T-cell (primary cell): ENCODE measurements at regions of chr5 and their contacts with region 1.

Region 1: GRCh38 chr5:112848116-112848811 is 12.8 kb upstream of the SRP19 start:
- DNase-seq: peak in 3 of 35 experiments; percentile 11 to 66 (median 12)
- ATAC-seq: peak; percentile 93 to 99 (median 96)
- H3K4me3 ChIP-seq: no peak overlapping the region
- H3K4me3 Mint-ChIP-seq: no peak overlapping the region
- H3K27ac ChIP-seq: no peak overlapping the region
- H3K27ac Mint-ChIP-seq: no peak overlapping the region
- H3K4me1 ChIP-seq: no peaks in the 10 kb centered on the region
- H3K4me1 Mint-ChIP-seq: peaks cover 4 to 7% (median 4%) of the 10 kb centered on the region in 3 donors
- H3K27me3 ChIP-seq: peaks cover 0 to 4% of the 10 kb centered on the region in 2 experiments
- H3K27me3 Mint-ChIP-seq: peaks cover 0 to 3% of the 10 kb centered on the region in 2 donors

Region 2: GRCh38 chr5:112551419-112552032 is 296.7 kb before region 1 on chr5:
- CTCF ChIA-PET with region 1: interaction called, 3 to 10 read pairs
- POLR2A ChIA-PET with region 1: no interaction called
- DNase-seq: peak in 21 of 35 experiments; percentile 3 to 73 (median 18)
- ATAC-seq: peak in 3 of 4 experiments; percentile 42 to 49 (median 43)
- H3K4me3 ChIP-seq: no peak overlapping the region
- H3K4me3 Mint-ChIP-seq: no peak overlapping the region
- H3K27ac ChIP-seq: no peak overlapping the region
- H3K27ac Mint-ChIP-seq: no peak overlapping the region
- H3K4me1 ChIP-seq: no peaks in the 10 kb centered on the region
- H3K4me1 Mint-ChIP-seq: no peaks in the 10 kb centered on the region
- H3K27me3 ChIP-seq: no peaks in the 10 kb centered on the region
- H3K27me3 Mint-ChIP-seq: peaks cover 0 to 17% of the 10 kb centered on the region in 2 donors

Region 3: DNA sequence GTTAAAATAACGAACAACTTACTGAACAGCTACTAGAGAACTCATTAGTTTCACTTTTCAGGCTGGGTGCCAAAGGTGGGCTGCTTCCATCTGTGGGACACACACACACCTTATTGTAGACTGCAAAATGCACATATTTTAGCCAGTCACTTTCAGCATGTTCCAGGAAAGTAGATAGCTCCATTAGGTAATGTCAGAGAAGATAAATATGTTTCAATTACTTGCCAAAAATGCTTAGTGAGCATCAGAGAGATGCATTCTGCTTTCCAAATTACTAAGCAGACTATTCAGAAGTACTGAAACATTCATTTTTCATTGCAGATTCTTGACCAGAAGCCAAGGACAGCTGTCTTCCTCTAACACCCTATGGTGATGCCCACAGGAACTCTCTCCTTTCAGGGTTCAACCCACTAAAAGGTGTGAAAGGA is 166.8 kb before region 1 on chr5:
- CTCF ChIA-PET with region 1: no interaction called
- POLR2A ChIA-PET with region 1: no interaction called
- DNase-seq: no peak
- ATAC-seq: no peak
- H3K4me3 ChIP-seq: no peak overlapping the region
- H3K4me3 Mint-ChIP-seq: no peak overlapping the region
- H3K27ac ChIP-seq: no peak overlapping the region
- H3K27ac Mint-ChIP-seq: no peak overlapping the region
- H3K4me1 ChIP-seq: no peaks in the 10 kb centered on the region
- H3K4me1 Mint-ChIP-seq: no peaks in the 10 kb centered on the region
- H3K27me3 ChIP-seq: peaks cover 0 to 11% of the 10 kb centered on the region in 2 experiments
- H3K27me3 Mint-ChIP-seq: peaks cover 23 to 38% of the 10 kb centered on the region in 2 donors

Region 4: GRCh38 chr5:112833971-112834370 is 14.3 kb before region 1 on chr5:
- CTCF ChIA-PET with region 1: interaction called, 3 to 11 read pairs
- POLR2A ChIA-PET with region 1: no interaction called
- DNase-seq: no peak
- ATAC-seq: no peak
- H3K4me3 ChIP-seq: no peak overlapping the region
- H3K4me3 Mint-ChIP-seq: no peak overlapping the region
- H3K27ac ChIP-seq: no peak overlapping the region
- H3K27ac Mint-ChIP-seq: no peak overlapping the region
- H3K4me1 ChIP-seq: no peaks in the 10 kb centered on the region
- H3K4me1 Mint-ChIP-seq: no peaks in the 10 kb centered on the region
- H3K27me3 ChIP-seq: no peaks in the 10 kb centered on the region
- H3K27me3 Mint-ChIP-seq: no peaks in the 10 kb centered on the region

Region 5: GRCh38 chr5:112860929-112861637 is 12.8 kb after region 1 on chr5 and contains the start of gene SRP19:
- CTCF ChIA-PET with region 1: interaction called, 7 to 15 read pairs
- POLR2A ChIA-PET with region 1: interaction called, 4 to 7 read pairs
- DNase-seq: peak; percentile 78 to 95 (median 88)
- ATAC-seq: peak; percentile 95 to 98 (median 97)
- H3K4me3 ChIP-seq: peak within 1 kb of the TSS; percentile 89 to 94
- H3K4me3 Mint-ChIP-seq: peak within 1 kb of the TSS; percentile 95 to 98 (median 97)
- H3K27ac ChIP-seq: peak within 1 kb of the TSS; percentile 89
- H3K27ac Mint-ChIP-seq: peak within 1 kb of the TSS; percentile 96 to 97
- H3K4me1 ChIP-seq: peaks cover 17 to 28% of the 10 kb centered on the region in 2 experiments
- H3K4me1 Mint-ChIP-seq: peaks cover 32 to 37% (median 36%) of the 10 kb centered on the region in 3 donors
- H3K27me3 ChIP-seq: peaks cover 0 to under 1% of the 10 kb centered on the region in 2 experiments
- H3K27me3 Mint-ChIP-seq: peaks cover 6 to 10% of the 10 kb centered on the region in 2 donors
- total RNA-seq, gene SRP19: 34.6 to 44.9 (median 40.4) TPM

Region 6: DNA sequence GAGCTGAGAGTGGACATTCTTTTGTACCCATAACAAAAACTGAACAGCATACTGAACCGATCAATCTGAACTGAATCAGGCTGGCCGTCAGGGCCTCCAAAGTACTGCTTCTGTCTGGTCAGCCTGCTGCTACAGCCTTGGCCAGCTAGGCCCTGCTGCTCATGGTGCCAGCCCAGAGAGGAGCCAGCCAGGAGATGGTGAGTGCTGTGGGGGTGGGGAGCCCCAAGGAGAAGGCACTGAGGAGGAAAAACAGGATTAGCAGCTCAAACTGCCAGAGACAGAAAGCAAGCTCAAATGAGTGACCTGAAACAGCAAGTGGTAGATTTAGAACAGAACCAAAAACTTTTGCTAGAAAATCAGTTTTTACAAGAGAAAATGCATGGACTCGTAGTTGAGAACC is 36.7 kb after region 1 on chr5:
- CTCF ChIA-PET with region 1: interaction called in 1 of 2 experiments, 13 read pairs
- POLR2A ChIA-PET with region 1: no interaction called
- DNase-seq: no peak
- ATAC-seq: no peak
- H3K4me3 ChIP-seq: no peak overlapping the region
- H3K4me3 Mint-ChIP-seq: no peak overlapping the region
- H3K27ac ChIP-seq: no peak overlapping the region
- H3K27ac Mint-ChIP-seq: peak overlapping the region; percentile 71 to 84
- H3K4me1 ChIP-seq: peaks cover 6 to 17% of the 10 kb centered on the region in 2 experiments
- H3K4me1 Mint-ChIP-seq: peaks cover 27 to 47% (median 45%) of the 10 kb centered on the region in 3 donors
- H3K27me3 ChIP-seq: no peaks in the 10 kb centered on the region
- H3K27me3 Mint-ChIP-seq: no peaks in the 10 kb centered on the region